Upper lobe of right lung (tissue), 1 donor: ENCODE measurements at regions of chr11 and their contacts with region 1.

Region 1: GRCh38 chr11:72722050-72722748 is 30.0 kb downstream of the ARAP1 start:
- DNase-seq: peak; percentile 92
- ATAC-seq: peak; percentile 79
- H3K4me3 ChIP-seq: peak overlapping the region; percentile 78
- H3K27ac ChIP-seq: peak overlapping the region; percentile 91
- H3K4me1 ChIP-seq: peaks cover 65% of the 10 kb centered on the region
- H3K27me3 ChIP-seq: no peaks in the 10 kb centered on the region
- CTCF ChIP-seq: no peak

Region 2: GRCh38 chr11:72793425-72794367 is 71.5 kb after region 1 on chr11 and contains the start of gene STARD10:
- intact Hi-C with region 1: loop called (anchors 5 kb)
- DNase-seq: peak; percentile 98
- ATAC-seq: peak; percentile 97
- H3K4me3 ChIP-seq: peak within 1 kb of the TSS; percentile 68
- H3K27ac ChIP-seq: peak within 1 kb of the TSS; percentile 87
- H3K4me1 ChIP-seq: peaks cover 28% of the 10 kb centered on the region
- H3K27me3 ChIP-seq: no peaks in the 10 kb centered on the region
- CTCF ChIP-seq: peak; percentile 95
- total RNA-seq, gene STARD10: 116 TPM

Region 3: DNA sequence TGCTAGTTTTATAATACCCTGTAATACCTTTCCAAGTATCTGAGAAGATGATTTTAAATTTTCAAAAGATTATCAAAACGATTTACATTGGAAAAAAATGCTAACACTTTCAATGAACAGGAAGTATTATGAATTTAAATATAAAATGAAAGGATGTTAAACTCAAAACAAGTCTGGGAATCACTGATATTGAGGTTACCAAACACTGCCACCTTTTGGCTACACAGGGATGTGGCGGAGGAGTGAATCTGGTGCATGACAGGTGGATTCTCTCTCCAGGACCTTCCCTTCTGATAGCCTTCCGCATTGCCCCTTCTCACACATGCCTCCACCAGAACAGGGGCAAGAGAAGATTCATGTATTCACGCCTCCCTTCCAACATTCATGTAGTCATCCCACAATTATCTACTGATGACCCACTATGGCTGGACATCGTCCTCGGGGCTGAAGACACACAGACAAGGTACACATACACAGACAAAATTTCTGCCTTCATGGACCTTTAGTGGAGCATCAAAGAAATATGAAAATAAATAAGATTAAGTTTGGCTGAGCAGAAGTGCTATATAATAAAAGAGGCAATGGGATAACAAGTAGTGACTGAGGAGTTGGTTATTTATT is 126.8 kb after region 1 on chr11:
- intact Hi-C with region 1: no loop called
- DNase-seq: no peak
- ATAC-seq: peak; percentile 76
- H3K4me3 ChIP-seq: no peak overlapping the region
- H3K27ac ChIP-seq: no peak overlapping the region
- H3K4me1 ChIP-seq: no peaks in the 10 kb centered on the region
- H3K27me3 ChIP-seq: no peaks in the 10 kb centered on the region
- CTCF ChIP-seq: peak; percentile 67

Region 4: DNA sequence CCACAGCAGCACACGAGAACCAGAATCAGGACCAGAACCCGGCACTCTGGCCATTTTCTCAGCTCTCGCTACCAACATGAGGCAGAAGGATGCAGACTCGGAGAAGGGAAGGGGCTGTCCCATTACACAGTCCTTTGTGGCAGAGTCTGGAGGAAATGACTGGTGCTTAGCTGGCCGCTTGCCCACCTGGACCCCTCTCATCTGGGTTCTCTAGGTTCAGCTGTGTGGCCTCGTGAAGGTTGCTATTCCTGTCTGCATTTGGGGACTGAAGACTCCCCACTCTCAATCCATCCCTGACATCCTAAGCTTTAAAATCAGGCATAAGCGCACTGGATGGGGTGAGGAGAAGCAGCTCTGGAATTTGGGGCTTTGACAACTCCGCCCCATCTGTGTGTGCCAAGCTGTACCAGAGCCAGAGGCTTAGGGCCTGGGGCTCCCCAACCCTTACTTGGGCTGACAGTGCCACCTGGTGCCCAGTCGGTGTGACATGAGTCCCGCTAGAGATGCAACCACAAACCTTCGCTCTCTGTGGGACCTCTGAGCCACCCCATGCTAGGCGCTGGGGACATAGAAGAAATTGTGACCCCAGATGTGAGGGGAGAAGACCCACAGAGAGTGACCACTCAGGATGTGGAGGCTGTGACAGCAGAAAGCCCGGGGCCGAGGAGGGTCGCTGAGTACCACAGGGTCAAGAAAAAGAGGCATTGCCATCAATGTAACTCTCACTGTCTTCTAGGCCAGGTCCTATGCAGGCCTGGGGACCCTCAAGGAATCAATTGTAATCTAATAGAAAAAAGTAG is 455.8 kb after region 1 on chr11:
- intact Hi-C with region 1: loop called (anchors 10 kb)
- DNase-seq: peak; percentile 89
- ATAC-seq: peak; percentile 96
- H3K4me3 ChIP-seq: no peak overlapping the region
- H3K27ac ChIP-seq: peak overlapping the region; percentile 47
- H3K4me1 ChIP-seq: peaks cover 26% of the 10 kb centered on the region
- H3K27me3 ChIP-seq: no peaks in the 10 kb centered on the region
- CTCF ChIP-seq: peak; percentile 81